ENCODE measurements at regions of chr2 and their contacts with region 1.

Region 1: GRCh38 chr2:134365356-134365755 is 111.5 kb downstream of the MGAT5 start:
- DNase-seq: no peak

Region 2: GRCh38 chr2:134347756-134348155 is 17.6 kb before region 1 on chr2:
- intact Hi-C with region 1: loop called (anchors 2 kb)
- DNase-seq: no peak

Region 3: GRCh38 chr2:134491771-134492441 is 126.5 kb after region 1 on chr2:
- intact Hi-C with region 1: no loop called
- DNase-seq: no peak

Region 4: GRCh38 chr2:134623796-134624195 is 258.4 kb after region 1 on chr2:
- intact Hi-C with region 1: no loop called
- DNase-seq: no peak